ENCODE measurements at regions of chr2 and their contacts with region 1.

Region 1: DNA sequence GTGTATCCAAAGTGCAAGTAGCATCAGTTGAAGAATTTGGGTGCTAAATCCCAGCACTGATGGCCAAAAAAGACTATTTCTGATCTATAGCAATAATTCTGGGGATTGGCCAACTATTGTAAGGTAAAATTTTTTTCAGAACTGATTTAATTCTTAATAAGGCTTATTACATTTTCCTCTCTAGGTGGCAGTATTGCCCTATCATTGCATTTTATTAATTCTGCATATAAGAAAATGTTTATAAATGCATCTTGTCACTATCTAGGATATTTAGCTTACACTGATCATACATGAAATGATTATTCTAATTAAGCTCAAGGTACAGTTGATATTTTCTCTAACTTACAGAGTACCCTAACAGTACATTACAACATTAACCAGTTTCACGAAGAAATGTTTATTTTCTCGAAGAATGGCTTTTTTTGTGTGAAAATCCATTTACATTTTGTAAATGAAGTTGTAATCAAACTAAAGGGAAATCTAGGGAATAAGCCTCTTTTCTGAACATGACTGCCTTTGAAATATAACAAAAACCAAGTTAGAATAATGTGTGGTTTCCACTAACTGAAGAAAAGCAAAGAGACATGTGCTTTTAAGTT is 11.0 kb downstream of the TTN start:
- DNase-seq: no peak
- H3K4me3 ChIP-seq: no peak overlapping the region
- H3K27ac ChIP-seq: no peak overlapping the region
- H3K4me1 ChIP-seq: no peaks in the 10 kb centered on the region
- H3K27me3 ChIP-seq: no peaks in the 10 kb centered on the region
- CTCF ChIP-seq: peak in 3 of 4 experiments; percentile 29 to 56 (median 37)
- EP300 ChIP-seq: no peak
- POLR2A ChIP-seq: no peak

Region 2: DNA sequence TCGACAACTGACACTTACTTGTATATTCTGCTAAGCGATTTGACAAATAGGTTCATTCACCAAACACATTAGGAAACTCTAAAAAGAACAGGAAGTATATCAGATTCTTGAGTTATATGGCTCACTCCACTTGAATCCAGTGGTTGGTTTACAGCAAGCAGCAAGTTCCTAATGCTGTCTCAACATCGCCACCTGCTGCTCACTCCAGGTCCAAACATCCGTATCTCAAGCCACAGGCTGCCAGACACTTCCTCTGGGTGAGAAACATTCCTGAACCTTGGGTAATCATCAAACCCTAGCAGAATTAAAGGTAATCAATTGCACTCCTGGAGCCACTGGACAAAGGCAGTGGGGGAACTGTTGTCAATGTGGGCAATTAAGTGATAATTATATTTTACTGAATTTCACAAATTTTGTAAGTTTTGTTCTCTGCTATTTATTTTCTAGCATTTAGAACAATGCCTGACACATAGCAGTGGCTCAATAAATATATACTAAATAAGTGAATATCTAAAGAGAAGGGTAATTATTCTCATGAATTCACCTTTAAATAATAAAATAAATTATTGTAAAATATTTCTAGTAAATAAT is 118.2 kb after region 1 on chr2:
- intact Hi-C with region 1: loop called (anchors 1 kb)
- DNase-seq: peak; percentile 86
- H3K4me3 ChIP-seq: no peak overlapping the region
- H3K27ac ChIP-seq: no peak overlapping the region
- H3K4me1 ChIP-seq: no peaks in the 10 kb centered on the region
- H3K27me3 ChIP-seq: no peaks in the 10 kb centered on the region
- CTCF ChIP-seq: peak; percentile 60 to 75 (median 66)
- EP300 ChIP-seq: no peak
- POLR2A ChIP-seq: no peak

Region 3: GRCh38 chr2:179751163-179751809 is 955.1 kb after region 1 on chr2:
- intact Hi-C with region 1: loop called (anchors 10 kb)
- DNase-seq: no peak
- H3K4me3 ChIP-seq: no peak overlapping the region
- H3K27ac ChIP-seq: no peak overlapping the region
- H3K4me1 ChIP-seq: peaks cover 0 to 10% (median 0%) of the 10 kb centered on the region in 4 donors
- H3K27me3 ChIP-seq: no peaks in the 10 kb centered on the region
- CTCF ChIP-seq: peak in 3 of 4 experiments; percentile 40 to 61 (median 40)
- EP300 ChIP-seq: no peak
- POLR2A ChIP-seq: no peak